Activated naive CD4-positive, alpha-beta T cell treated with anti-CD3 and anti-CD28 coated beads for 36 hours (primary cell): ENCODE measurements at regions of chr18 and their contacts with region 1.

Region 1: DNA sequence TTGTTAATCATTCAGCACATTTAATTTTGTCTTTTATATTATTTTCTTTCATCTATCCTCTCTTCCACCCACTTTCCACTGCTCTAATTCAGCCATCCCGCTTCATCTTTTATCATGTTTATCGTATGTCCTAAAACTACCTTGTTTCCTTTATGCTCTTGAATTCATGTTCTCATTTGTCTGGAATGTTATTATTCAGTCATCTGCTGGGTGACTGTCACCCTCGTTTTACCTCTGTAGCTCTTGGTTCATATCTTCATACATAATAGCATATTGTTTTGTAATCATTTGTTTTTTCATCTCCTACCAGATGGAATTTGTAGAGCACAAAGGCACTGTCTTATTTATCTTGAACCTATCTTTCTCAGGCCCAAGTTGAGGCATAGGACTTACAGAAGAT is 37.0 kb downstream of the SMCHD1 start:
- DNase-seq: no peak
- H3K4me3 Mint-ChIP-seq: no peak overlapping the region
- H3K27ac Mint-ChIP-seq: no peak overlapping the region
- H3K4me1 Mint-ChIP-seq: peaks cover 37% of the 10 kb centered on the region
- H3K27me3 Mint-ChIP-seq: no peaks in the 10 kb centered on the region

Region 2: DNA sequence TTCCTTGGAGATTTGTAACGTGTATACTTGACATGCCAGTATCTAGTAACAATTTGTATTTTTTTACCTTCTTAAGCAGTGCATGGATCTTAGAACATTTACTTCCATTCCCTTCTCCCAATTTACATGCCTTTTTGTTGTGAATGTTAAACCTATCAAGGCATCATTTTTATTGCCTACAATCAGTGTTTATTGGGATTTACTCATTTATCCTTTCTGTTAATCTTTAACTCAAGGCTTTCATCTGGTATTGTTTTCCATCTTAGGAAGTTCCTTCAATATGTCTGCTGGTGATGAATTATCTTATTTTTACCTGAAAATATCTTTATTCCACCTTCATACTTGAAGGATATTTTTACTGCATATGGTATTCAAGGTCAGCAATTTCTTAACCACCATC is 65.8 kb after region 1 on chr18:
- CTCF ChIA-PET with region 1: no interaction called
- intact Hi-C with region 1: loop called (anchors 10 kb)
- DNase-seq: no peak
- H3K4me3 Mint-ChIP-seq: no peak overlapping the region
- H3K27ac Mint-ChIP-seq: no peak overlapping the region
- H3K4me1 Mint-ChIP-seq: peaks cover 16% of the 10 kb centered on the region
- H3K27me3 Mint-ChIP-seq: no peaks in the 10 kb centered on the region

Region 3: GRCh38 chr18:2889761-2890192 is 197.3 kb after region 1 on chr18:
- CTCF ChIA-PET with region 1: no interaction called
- intact Hi-C with region 1: no loop called
- DNase-seq: no peak
- H3K4me3 Mint-ChIP-seq: no peak overlapping the region
- H3K27ac Mint-ChIP-seq: no peak overlapping the region
- H3K4me1 Mint-ChIP-seq: peaks cover 31% of the 10 kb centered on the region
- H3K27me3 Mint-ChIP-seq: no peaks in the 10 kb centered on the region